Heart right ventricle (tissue), 16 donors: ENCODE measurements at regions of chr17 and their contacts with region 1.

Region 1: GRCh38 chr17:59435238-59435637 is 103.8 kb downstream of the YPEL2 start:
- DNase-seq: no peak
- ATAC-seq: peak in 1 of 8 donors; percentile 34
- H3K4me3 ChIP-seq: no peak overlapping the region
- H3K27ac ChIP-seq: peak overlapping the region in 1 of 10 donors; percentile 29
- H3K4me1 ChIP-seq: peaks cover 2 to 70% (median 31%) of the 10 kb centered on the region in 9 donors
- H3K27me3 ChIP-seq: no peaks in the 10 kb centered on the region
- CTCF ChIP-seq: no peak

Region 2: DNA sequence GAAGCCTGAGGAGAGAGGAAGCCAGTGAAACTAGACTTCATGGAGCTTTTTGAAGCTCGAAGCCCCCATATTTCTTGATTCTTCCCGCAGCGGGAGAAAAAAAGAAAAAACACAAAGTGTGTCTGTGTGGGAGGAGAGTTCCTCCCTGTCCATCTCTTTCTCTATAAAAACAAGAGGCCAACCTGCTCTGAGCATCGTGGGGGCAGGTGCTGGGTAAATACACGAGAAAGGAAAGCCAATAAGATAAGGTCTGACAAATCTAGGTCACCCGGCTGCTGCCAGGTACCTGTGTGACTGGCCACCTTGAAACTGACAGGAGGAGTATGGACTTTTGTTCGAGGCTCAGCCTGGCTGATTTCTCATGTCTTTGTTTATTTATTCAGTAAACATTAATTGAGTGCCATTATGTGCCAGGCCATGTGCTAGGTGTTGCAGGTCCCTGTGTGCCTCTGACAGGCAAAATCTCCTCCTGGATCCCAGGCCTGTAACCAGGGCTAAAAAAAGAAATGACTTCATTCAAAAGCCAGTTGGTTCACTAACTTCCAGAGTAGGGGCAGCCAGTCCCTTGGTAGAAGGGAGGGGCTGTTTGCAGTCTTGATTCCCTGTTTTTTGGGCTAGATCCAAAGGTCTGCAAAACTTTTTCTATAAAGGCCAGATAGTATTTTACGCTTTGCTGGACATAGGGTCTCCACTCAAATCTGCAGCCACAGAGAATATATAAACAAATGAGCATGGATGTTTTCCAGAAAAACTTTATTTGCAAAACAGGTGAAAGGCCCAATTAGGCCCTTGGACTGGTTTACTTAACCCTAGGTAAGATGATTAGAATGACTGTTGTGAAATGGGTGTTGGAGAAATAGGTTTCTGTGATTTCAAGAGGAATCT is 68.2 kb before region 1 on chr17:
- intact Hi-C with region 1: loop called in 1 of 10 experiments (anchors 5 kb)
- DNase-seq: peak in 1 of 2 donors; percentile 71
- ATAC-seq: peak; percentile 71 to 85 (median 81)
- H3K4me3 ChIP-seq: peak overlapping the region in 1 of 10 donors; percentile 10
- H3K27ac ChIP-seq: peak overlapping the region; percentile 89 to 97 (median 92)
- H3K4me1 ChIP-seq: peaks cover 63 to 100% (median 99%) of the 10 kb centered on the region in 9 donors
- H3K27me3 ChIP-seq: no peaks in the 10 kb centered on the region
- CTCF ChIP-seq: no peak